Right ventricle myocardium inferior (tissue), 1 donor: ENCODE measurements at regions of chr11 and their contacts with region 1.

Region 1: DNA sequence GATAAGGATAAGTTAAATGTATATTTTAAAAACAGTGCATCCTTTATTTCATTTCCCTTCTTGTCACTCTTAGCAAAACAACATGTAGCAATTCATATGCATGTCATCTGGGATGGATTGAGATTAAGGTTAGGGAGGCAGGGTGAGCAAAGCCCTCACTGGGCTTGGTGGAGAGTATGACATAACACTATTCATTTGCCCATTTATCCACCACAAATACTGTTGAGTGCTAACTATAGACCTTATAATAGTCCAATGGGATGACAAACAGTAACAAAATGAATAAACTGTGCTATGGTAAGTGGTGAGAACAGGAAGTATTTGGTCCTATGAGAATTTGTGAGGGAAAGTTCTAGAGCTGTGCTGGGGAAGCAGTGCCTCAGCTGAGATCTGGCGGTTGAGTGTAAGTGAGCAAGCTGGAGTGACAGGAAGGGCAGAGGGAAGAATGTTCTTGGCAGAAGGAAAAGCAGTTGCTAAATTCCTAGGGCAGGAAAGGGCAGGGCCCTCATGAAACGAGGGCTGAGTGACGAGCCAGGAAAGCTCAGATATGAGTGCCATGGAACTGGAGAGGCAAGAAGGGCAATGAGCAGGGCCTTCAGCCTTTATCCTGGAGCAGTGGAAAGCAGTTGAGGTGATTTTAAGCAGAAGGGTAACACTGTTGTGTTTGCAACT is 6.7 kb downstream of the HSD17B12 start:
- DNase-seq: no peak
- ATAC-seq: peak; percentile 95

Region 2: GRCh38 chr11:43497144-43497543 is 190.1 kb before region 1 on chr11:
- intact Hi-C with region 1: no loop called
- DNase-seq: no peak
- ATAC-seq: no peak

Region 3: GRCh38 chr11:43542750-43543712 is 144.2 kb before region 1 on chr11:
- intact Hi-C with region 1: no loop called
- DNase-seq: no peak
- ATAC-seq: no peak

Region 4: DNA sequence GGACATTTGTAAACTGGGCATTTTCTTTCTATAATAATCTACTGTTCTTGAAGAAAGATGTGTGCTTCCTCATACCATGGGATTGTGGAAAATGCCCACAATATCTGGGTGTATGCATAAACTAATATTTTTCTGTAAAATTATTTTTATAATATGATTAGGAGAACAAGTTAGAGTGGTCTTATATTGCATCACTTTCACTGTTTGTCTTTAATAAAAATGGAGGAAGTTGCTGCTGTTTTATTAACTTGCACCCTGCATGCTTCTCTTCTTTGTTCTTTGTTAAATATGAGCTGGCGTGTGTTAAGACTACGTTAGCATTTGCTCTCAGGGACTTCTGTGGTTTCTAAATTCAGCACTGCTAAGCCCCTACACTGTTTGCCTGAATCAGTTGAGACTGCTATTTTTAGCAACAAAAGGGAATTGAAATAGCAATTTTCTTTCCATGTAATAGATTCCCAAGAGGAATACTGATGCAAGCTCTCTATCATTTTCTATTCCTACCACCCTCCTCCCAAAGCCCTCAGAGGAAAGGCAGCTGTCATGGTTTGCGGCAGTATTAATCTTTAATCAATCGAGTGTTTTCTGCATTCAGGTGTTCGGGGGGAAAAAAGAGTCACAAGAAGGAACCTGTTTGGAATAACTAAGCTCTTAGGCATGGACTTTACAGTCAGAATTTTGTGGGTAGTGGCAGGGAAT is 49.4 kb after region 1 on chr11:
- intact Hi-C with region 1: loop called (anchors 2 kb)
- DNase-seq: no peak
- ATAC-seq: peak; percentile 66